CD14-positive monocyte (primary cell): ENCODE measurements at regions of chr9 and their contacts with region 1.

Region 1: DNA sequence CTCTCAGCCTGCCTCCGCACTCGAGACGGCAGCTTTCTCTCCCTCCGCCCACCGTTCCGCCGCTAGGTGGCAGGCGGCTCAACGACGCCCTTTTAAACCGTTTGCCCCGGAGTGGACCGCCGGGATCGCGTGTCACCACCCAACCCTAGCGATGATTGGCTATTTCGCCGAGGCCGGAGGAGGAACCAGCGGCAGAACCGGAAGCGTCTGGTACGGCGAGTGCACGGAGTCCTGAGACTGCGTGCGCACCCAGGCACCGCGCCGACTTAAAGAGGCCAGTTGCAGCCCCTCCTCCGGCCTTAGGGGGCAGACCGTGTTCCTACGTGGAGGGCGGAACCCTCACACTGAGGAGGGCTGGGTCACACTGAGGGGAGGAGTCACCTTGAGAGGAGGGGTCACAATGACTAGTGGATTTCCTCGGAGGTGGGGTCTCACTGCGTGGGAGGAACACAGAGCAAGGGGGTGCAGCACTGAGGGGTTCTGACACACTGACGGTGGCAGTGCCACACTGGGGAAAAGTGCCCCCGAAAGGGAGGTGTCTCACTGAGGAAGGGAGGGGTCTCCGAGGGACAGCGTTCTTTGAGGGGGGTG is 980 bp upstream of the TESK1 start:
- DNase-seq: peak; percentile 100
- H3K4me3 ChIP-seq: peak overlapping the region; percentile 57 to 98 (median 69)
- H3K4me3 Mint-ChIP-seq: peak overlapping the region; percentile 97 to 98
- H3K27ac ChIP-seq: peak overlapping the region; percentile 78 to 90
- H3K27ac Mint-ChIP-seq: peak overlapping the region; percentile 96 to 99 (median 99)
- H3K4me1 ChIP-seq: peaks cover 33 to 42% of the 10 kb centered on the region in 2 donors
- H3K4me1 Mint-ChIP-seq: peaks cover 34% of the 10 kb centered on the region
- H3K27me3 ChIP-seq: no peaks in the 10 kb centered on the region
- H3K27me3 Mint-ChIP-seq: peaks cover 0 to 2% (median 0%) of the 10 kb centered on the region in 3 donors
- CTCF ChIP-seq: peak; percentile 96

Region 2: DNA sequence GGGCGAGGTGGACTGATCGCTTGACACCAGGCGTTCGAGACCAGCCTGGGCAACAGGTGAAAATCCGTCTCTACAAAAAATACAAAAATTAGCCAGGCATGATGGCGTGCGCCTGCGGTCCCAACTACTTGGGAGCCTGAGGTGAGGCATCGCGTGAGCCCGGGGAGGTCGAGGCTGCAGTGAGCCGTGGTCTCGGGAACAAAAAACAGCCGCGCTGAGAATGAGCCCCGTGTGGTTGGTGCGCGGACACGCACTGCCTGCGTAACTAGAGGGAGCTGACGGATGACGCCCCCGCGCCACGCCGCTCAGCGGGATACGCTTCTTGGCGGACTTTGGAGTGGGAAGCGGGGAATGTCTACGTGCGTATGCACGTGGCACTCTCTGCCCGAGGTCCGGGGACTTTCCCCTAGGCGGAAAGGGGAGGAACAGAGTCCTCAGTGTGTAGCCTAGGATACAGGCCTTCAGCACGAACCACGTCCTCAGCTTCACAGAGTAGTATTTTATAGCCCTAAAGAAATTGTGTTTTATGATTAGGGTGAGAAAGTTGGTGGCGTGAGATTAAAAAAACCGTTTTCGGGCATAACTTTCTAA is 53.6 kb after region 1 on chr9 and contains the start of gene RMRP:
- intact Hi-C with region 1: loop called (anchors 5 kb)
- DNase-seq: peak; percentile 94 to 99 (median 95)
- H3K4me3 ChIP-seq: peak within 1 kb of the TSS; percentile 83 to 94 (median 88)
- H3K4me3 Mint-ChIP-seq: peak within 1 kb of the TSS; percentile 87 to 90
- H3K27ac ChIP-seq: peak within 1 kb of the TSS; percentile 85 to 98
- H3K27ac Mint-ChIP-seq: peak within 1 kb of the TSS; percentile 95 to 100 (median 98)
- H3K4me1 ChIP-seq: peaks cover 29 to 43% of the 10 kb centered on the region in 2 donors
- H3K4me1 Mint-ChIP-seq: peaks cover 43% of the 10 kb centered on the region
- H3K27me3 ChIP-seq: no peaks in the 10 kb centered on the region
- H3K27me3 Mint-ChIP-seq: peaks cover 0 to 8% (median 5%) of the 10 kb centered on the region in 3 donors
- CTCF ChIP-seq: no peak
- polyA plus RNA-seq, gene RMRP: 13.3 TPM in 1 of 3 donors, not detected in the others

Region 3: DNA sequence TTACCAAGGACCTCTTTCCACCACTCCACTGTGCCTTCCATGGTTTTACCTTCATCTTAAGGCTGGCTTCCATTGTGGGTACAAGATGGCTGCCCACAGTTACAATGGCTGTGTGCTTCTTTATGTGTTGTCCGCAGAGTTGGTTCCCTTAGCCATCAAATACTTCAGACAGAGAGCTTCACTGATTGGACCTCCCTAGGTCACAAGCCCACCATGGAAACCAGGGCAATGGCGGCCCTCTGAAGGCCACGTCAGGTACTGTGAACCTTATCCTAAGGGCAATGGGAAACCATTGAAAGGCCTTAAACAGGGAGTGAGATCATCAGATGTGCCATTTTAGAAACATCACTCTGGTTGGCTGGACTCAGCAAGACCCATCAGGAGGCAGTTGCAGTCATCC is 63.9 kb after region 1 on chr9:
- intact Hi-C with region 1: no loop called
- DNase-seq: no peak
- H3K4me3 ChIP-seq: no peak overlapping the region
- H3K4me3 Mint-ChIP-seq: no peak overlapping the region
- H3K27ac ChIP-seq: no peak overlapping the region
- H3K27ac Mint-ChIP-seq: no peak overlapping the region
- H3K4me1 ChIP-seq: peaks cover 23 to 28% of the 10 kb centered on the region in 2 donors
- H3K4me1 Mint-ChIP-seq: peaks cover 24% of the 10 kb centered on the region
- H3K27me3 ChIP-seq: no peaks in the 10 kb centered on the region
- H3K27me3 Mint-ChIP-seq: peaks cover 0 to 6% (median 3%) of the 10 kb centered on the region in 3 donors
- CTCF ChIP-seq: no peak

Region 4: DNA sequence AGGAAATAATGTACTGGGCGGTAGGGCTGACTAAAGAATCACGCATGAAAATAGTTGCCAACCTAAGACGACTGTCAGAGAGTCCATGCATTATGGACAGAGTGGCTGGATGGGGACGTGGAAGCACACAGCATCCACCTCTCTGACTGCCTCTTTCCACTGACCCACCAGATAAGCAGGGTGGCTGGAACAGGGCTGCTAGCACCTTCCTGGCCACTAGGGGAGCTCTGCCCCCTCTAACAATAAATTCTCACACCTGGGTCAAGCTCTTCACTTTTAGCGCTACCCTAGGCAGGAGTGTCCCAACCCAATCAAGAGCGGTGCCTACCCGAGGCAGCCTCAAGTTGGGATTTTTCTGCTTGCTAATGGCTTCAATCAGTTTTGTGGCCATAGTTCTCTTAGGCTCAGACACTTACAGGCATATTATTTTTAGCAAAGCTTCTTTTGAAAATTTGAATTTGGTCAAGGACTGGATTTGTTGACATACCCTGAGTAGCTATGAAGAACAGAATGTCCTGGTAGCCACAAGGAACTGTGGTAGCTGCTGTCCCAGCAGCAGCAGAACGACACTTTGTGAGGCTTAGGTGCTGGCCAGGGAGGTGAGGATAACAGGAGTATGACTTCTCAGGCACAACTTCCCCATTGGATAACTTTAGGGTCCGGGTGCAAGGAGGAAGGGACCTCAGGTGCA is 92.6 kb after region 1 on chr9:
- intact Hi-C with region 1: loop called in 1 of 2 experiments (anchors 2 kb)
- DNase-seq: peak; percentile 33 to 60 (median 57)
- H3K4me3 ChIP-seq: no peak overlapping the region
- H3K4me3 Mint-ChIP-seq: no peak overlapping the region
- H3K27ac ChIP-seq: no peak overlapping the region
- H3K27ac Mint-ChIP-seq: peak overlapping the region in 4 of 7 donors; percentile 22 to 87 (median 63)
- H3K4me1 ChIP-seq: peaks cover 0 to under 1% of the 10 kb centered on the region in 2 donors
- H3K4me1 Mint-ChIP-seq: no peaks in the 10 kb centered on the region
- H3K27me3 ChIP-seq: no peaks in the 10 kb centered on the region
- H3K27me3 Mint-ChIP-seq: peaks cover 0 to 3% (median 0%) of the 10 kb centered on the region in 3 donors
- CTCF ChIP-seq: peak; percentile 93

Region 5: GRCh38 chr9:35748858-35749514 is 144.9 kb after region 1 on chr9 and contains the starts of genes GBA2 and RGP1:
- intact Hi-C with region 1: loop called in 1 of 2 experiments (anchors 5 kb)
- DNase-seq: peak; percentile 61 to 62 (median 62)
- H3K4me3 ChIP-seq: peak within 1 kb of the TSS; percentile 86 to 90 (median 89)
- H3K4me3 Mint-ChIP-seq: peak within 1 kb of the TSS; percentile 95
- H3K27ac ChIP-seq: peak within 1 kb of the TSS; percentile 59 to 80
- H3K27ac Mint-ChIP-seq: peak within 1 kb of the TSS; percentile 86 to 95 (median 91)
- H3K4me1 ChIP-seq: peaks cover 46 to 50% of the 10 kb centered on the region in 2 donors
- H3K4me1 Mint-ChIP-seq: peaks cover 49% of the 10 kb centered on the region
- H3K27me3 ChIP-seq: no peaks in the 10 kb centered on the region
- H3K27me3 Mint-ChIP-seq: peaks cover 0 to 2% (median 0%) of the 10 kb centered on the region in 3 donors
- CTCF ChIP-seq: no peak
- polyA plus RNA-seq, gene GBA2: 18.1 to 130 (median 26.4) TPM
- polyA plus RNA-seq, gene RGP1: 2.3 to 9.0 (median 3.3) TPM

Region 6: DNA sequence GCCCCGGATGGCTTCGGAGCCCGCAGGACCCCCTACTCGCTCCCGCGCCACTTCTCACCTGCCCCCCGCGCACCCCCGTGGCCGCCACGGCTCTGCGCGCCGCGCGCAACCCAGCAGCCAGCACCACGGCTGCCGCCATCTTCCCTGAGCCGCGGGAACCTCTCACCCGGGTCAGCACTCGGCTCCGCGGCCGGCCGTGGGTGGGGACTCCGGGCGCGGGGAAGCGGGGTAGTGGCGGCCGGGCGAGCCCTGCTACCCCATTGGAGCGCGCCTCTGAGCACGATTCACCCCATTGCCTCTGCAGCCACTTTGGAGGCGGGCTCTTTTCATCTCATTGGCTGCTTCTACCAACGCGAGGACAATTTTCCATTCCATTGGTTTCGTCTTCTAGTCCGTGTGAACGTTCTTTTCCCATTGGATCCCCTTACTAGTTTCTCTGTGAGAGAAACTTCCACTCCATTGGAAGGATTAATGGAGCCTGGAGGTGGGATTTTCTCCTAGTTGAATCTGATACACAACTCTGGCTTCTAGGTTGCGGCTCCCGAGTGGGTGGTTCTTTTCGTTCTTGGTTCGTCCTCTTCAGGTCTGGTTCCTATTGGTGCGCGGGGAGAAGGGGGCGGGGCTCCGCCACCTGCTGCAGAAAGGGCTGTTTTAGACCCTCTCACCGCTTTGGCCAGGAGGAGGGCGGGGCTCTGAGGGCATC is 210.9 kb after region 1 on chr9 and contains the start of gene HINT2:
- intact Hi-C with region 1: loop called in 1 of 2 experiments (anchors 10 kb)
- DNase-seq: peak; percentile 91 to 96 (median 92)
- H3K4me3 ChIP-seq: peak within 1 kb of the TSS; percentile 78 to 90 (median 88)
- H3K4me3 Mint-ChIP-seq: peak within 1 kb of the TSS; percentile 88 to 94
- H3K27ac ChIP-seq: peak within 1 kb of the TSS; percentile 70 to 80
- H3K27ac Mint-ChIP-seq: peak within 1 kb of the TSS; percentile 84 to 95 (median 93)
- H3K4me1 ChIP-seq: peaks cover 35 to 44% of the 10 kb centered on the region in 2 donors
- H3K4me1 Mint-ChIP-seq: peaks cover 34% of the 10 kb centered on the region
- H3K27me3 ChIP-seq: no peaks in the 10 kb centered on the region
- H3K27me3 Mint-ChIP-seq: peaks cover 3 to 9% (median 5%) of the 10 kb centered on the region in 3 donors
- CTCF ChIP-seq: no peak
- polyA plus RNA-seq, gene HINT2: 19.9 to 64.5 (median 59.1) TPM